HEK293 (cell line): ENCODE measurements at regions of chr15 and their contacts with region 1.

Region 1: DNA sequence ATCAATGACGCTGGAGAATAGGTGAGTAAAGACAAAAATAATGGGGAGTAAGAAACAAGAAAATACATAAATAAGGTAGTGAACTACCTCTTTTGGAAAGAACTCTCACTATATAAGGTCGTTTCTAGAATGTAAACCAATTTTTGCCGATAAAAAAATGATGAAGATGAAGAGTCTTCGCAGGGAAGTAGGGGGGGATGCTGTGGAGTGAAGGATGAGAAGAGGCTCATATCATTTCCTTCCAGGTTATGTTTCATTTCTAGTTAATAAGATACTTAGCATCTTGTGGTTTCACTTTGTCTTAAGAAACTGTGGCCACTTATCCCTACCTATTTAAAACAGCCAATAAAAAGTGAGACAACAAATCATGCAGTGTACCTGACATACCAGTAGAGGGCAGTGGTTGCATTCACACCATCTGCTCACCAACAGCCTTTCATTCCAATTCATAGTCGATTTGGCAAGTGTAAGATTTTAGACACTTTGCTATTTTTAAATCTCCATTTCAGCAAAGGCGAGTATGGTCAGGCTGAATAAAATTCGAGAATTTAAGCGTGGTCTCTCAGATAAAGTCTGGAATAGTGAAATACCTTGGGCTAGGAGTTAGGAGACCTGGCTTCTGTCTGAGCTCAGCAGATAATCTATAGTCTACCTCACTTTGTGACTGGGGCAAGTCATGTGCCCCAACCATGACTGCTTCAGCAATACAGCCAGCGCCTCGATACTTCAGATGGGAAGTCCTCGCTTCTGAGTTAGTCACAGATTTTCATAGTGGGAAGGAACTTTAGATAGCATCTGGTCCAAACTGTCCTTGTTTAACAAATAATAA is 28.9 kb upstream of the ICE2 start:
- H3K4me3 ChIP-seq: no peak overlapping the region
- H3K27ac ChIP-seq: no peak overlapping the region
- H3K4me1 ChIP-seq: no peaks in the 10 kb centered on the region
- CTCF ChIP-seq: peak; percentile 53

Region 2: DNA sequence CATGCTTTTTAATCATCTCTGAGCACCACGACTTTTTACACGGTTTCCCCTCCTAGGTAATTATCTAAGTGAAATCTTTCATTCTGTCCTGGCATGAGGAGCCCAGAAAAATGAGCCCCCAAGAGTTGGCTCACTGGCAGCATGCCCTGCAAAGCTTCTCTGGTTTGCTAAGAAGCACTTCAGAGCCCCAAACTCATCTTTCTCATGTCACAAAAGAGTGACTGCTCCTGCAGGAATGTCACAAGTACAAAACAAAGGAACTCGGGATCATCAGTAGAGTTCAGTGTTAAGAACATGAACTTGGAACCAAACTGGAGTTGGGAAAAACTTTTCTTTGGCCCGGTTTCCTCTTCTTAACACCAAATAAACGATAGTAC is 379.8 kb before region 1 on chr15:
- CTCF ChIA-PET with region 1: no interaction called
- POLR2A ChIA-PET with region 1: no interaction called
- H3K4me3 ChIP-seq: peak overlapping the region; percentile 19; the same call in 1 of the 2 replicates
- H3K27ac ChIP-seq: peak overlapping the region; percentile 66
- H3K4me1 ChIP-seq: peaks cover 3% of the 10 kb centered on the region; the same call in 1 of the 2 replicates
- CTCF ChIP-seq: no peak

Region 3: GRCh38 chr15:60520825-60521368 is 13.1 kb after region 1 on chr15:
- CTCF ChIA-PET with region 1: interaction called, 20 read pairs
- POLR2A ChIA-PET with region 1: no interaction called
- H3K4me3 ChIP-seq: no peak overlapping the region
- H3K27ac ChIP-seq: no peak overlapping the region
- H3K4me1 ChIP-seq: peaks cover 3% of the 10 kb centered on the region; the same call in 1 of the 2 replicates
- CTCF ChIP-seq: peak; percentile 43; the same call in 1 of the 2 replicates